Activated CD4-positive, alpha-beta T cell treated with anti-CD3 and anti-CD28 coated beads for 36 hours (primary cell): ENCODE measurements at regions of chr1 and their contacts with region 1.

Region 1: GRCh38 chr1:6784560-6785317 is 515 bp upstream of the CAMTA1 start:
- DNase-seq: peak; percentile 99
- ATAC-seq: peak; percentile 88
- H3K4me3 Mint-ChIP-seq: peak overlapping the region; percentile 75
- H3K27ac Mint-ChIP-seq: peak overlapping the region; percentile 78
- H3K4me1 Mint-ChIP-seq: peaks cover 42% of the 10 kb centered on the region
- H3K27me3 Mint-ChIP-seq: no peaks in the 10 kb centered on the region

Region 2: DNA sequence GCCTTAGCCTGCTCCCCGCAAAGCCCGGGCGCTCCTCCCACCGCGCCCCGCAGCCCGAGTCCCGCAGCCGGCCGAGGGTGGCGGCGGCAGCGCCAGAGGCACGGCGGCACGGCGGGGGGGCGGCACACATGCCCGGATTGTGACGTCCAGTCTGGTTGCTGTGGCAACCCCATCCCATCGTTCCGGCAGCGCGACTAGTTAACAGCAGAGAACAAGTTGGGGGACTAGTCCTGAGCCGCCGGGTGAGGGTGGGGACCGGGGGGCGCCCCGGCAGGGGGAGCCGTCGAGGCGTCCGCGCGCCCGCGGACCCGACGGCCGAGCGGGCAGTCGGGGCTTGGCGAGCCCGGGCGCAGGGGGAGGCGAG is 604.5 kb before region 1 on chr1 and contains the start of gene CHD5:
- CTCF ChIA-PET with region 1: no interaction called
- POLR2A ChIA-PET with region 1: no interaction called
- intact Hi-C with region 1: no loop called
- DNase-seq: peak; percentile 26
- ATAC-seq: no peak
- H3K4me3 Mint-ChIP-seq: no peak within 1 kb of the TSS
- H3K27ac Mint-ChIP-seq: no peak within 1 kb of the TSS
- H3K4me1 Mint-ChIP-seq: peaks cover 25% of the 10 kb centered on the region
- H3K27me3 Mint-ChIP-seq: peaks cover 36% of the 10 kb centered on the region
- total RNA-seq, gene CHD5: 0.25 to 0.76 TPM

Region 3: GRCh38 chr1:6235296-6235677 is 549.5 kb before region 1 on chr1:
- CTCF ChIA-PET with region 1: no interaction called
- POLR2A ChIA-PET with region 1: no interaction called
- intact Hi-C with region 1: loop called in 1 of 2 experiments (anchors 10 kb)
- DNase-seq: no peak
- ATAC-seq: peak; percentile 7
- H3K4me3 Mint-ChIP-seq: peak overlapping the region; percentile 88
- H3K27ac Mint-ChIP-seq: peak overlapping the region; percentile 78
- H3K4me1 Mint-ChIP-seq: peaks cover 12% of the 10 kb centered on the region
- H3K27me3 Mint-ChIP-seq: peaks cover 11% of the 10 kb centered on the region

Region 4: GRCh38 chr1:6246497-6247295 is 538.0 kb before region 1 on chr1:
- CTCF ChIA-PET with region 1: no interaction called
- POLR2A ChIA-PET with region 1: no interaction called
- intact Hi-C with region 1: no loop called
- DNase-seq: peak; percentile 90
- ATAC-seq: peak; percentile 70
- H3K4me3 Mint-ChIP-seq: no peak overlapping the region
- H3K27ac Mint-ChIP-seq: peak overlapping the region; percentile 35
- H3K4me1 Mint-ChIP-seq: peaks cover 7% of the 10 kb centered on the region
- H3K27me3 Mint-ChIP-seq: peaks cover 49% of the 10 kb centered on the region

Region 5: GRCh38 chr1:6554031-6554906 is 230.5 kb before region 1 on chr1 and contains the start of gene NOL9:
- CTCF ChIA-PET with region 1: no interaction called
- POLR2A ChIA-PET with region 1: no interaction called
- intact Hi-C with region 1: loop called in 1 of 2 experiments (anchors 5 kb)
- DNase-seq: peak; percentile 97
- ATAC-seq: peak; percentile 98
- H3K4me3 Mint-ChIP-seq: peak within 1 kb of the TSS; percentile 82
- H3K27ac Mint-ChIP-seq: peak within 1 kb of the TSS; percentile 55
- H3K4me1 Mint-ChIP-seq: peaks cover 19% of the 10 kb centered on the region
- H3K27me3 Mint-ChIP-seq: no peaks in the 10 kb centered on the region
- total RNA-seq, gene NOL9: 37.4 to 44.7 TPM

Region 6: GRCh38 chr1:6574025-6574620 is 210.6 kb before region 1 on chr1:
- CTCF ChIA-PET with region 1: no interaction called
- POLR2A ChIA-PET with region 1: no interaction called
- intact Hi-C with region 1: no loop called
- DNase-seq: no peak
- ATAC-seq: no peak
- H3K4me3 Mint-ChIP-seq: no peak overlapping the region
- H3K27ac Mint-ChIP-seq: no peak overlapping the region
- H3K4me1 Mint-ChIP-seq: peaks cover 1% of the 10 kb centered on the region
- H3K27me3 Mint-ChIP-seq: no peaks in the 10 kb centered on the region

Region 7: GRCh38 chr1:6624710-6625583 is 159.8 kb before region 1 on chr1 and contains the start of gene THAP3:
- CTCF ChIA-PET with region 1: no interaction called
- POLR2A ChIA-PET with region 1: interaction called, 5 read pairs
- intact Hi-C with region 1: loop called in 1 of 2 experiments (anchors 1 kb)
- DNase-seq: peak; percentile 96
- ATAC-seq: peak; percentile 98
- H3K4me3 Mint-ChIP-seq: peak within 1 kb of the TSS; percentile 85
- H3K27ac Mint-ChIP-seq: peak within 1 kb of the TSS; percentile 78
- H3K4me1 Mint-ChIP-seq: peaks cover 28% of the 10 kb centered on the region
- H3K27me3 Mint-ChIP-seq: no peaks in the 10 kb centered on the region
- total RNA-seq, gene THAP3: 19.4 to 22.1 TPM

Region 8: DNA sequence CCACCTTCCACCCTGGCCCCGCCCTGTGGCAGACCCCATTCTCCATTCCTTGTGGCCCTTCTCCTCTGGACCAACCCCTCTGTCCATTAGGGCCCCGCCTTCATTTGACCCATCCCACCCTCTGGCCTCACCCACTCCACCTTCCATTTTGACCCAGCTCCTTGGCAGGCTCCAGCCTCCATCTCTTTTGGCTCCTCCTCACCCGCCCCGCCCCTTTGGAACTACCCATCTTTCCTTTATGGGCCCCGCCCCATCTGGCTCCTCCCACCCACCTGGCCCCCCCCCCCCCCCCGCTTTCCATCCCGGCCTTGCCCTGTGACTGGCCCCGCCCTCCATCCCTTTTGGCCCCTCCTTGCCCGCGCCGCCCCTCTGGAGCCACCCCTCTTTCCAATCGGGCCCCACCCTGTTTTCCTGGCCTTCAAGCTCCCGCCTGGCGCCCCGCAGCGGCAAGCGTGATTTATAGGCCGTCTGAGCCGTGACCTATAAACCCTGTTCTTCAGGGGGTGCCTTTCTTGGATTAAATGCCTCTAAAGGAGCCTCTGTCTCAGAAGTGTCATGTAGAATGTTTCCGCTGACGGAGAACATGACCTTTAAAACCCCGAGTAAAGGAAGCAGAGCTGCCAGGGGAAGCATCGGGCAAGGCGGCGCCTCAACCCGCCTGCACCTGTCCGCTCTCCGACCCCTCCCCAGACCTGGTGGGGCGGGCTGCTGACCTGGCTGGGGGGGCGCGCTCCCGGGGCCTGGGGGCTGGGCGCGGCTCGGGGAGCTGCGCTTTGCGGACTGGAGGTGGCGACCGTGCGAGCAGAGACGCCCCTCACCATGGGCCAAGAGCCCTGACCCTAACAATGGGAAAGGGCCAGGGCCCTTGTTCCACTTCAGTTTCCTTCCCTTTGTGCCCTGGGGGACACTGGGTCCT is 178.5 kb after region 1 on chr1:
- CTCF ChIA-PET with region 1: no interaction called
- POLR2A ChIA-PET with region 1: interaction called, 3 read pairs
- intact Hi-C with region 1: loop called in 1 of 2 experiments (anchors 1 kb)
- DNase-seq: peak; percentile 93
- ATAC-seq: peak; percentile 63
- H3K4me3 Mint-ChIP-seq: peak overlapping the region; percentile 69
- H3K27ac Mint-ChIP-seq: peak overlapping the region; percentile 85
- H3K4me1 Mint-ChIP-seq: peaks cover 22% of the 10 kb centered on the region
- H3K27me3 Mint-ChIP-seq: peaks cover 8% of the 10 kb centered on the region

Region 9: GRCh38 chr1:7373876-7374562 is 589.3 kb after region 1 on chr1:
- CTCF ChIA-PET with region 1: no interaction called
- POLR2A ChIA-PET with region 1: no interaction called
- intact Hi-C with region 1: no loop called
- DNase-seq: no peak
- ATAC-seq: no peak
- H3K4me3 Mint-ChIP-seq: no peak overlapping the region
- H3K27ac Mint-ChIP-seq: no peak overlapping the region
- H3K4me1 Mint-ChIP-seq: no peaks in the 10 kb centered on the region
- H3K27me3 Mint-ChIP-seq: peaks cover 2% of the 10 kb centered on the region

Region 10: DNA sequence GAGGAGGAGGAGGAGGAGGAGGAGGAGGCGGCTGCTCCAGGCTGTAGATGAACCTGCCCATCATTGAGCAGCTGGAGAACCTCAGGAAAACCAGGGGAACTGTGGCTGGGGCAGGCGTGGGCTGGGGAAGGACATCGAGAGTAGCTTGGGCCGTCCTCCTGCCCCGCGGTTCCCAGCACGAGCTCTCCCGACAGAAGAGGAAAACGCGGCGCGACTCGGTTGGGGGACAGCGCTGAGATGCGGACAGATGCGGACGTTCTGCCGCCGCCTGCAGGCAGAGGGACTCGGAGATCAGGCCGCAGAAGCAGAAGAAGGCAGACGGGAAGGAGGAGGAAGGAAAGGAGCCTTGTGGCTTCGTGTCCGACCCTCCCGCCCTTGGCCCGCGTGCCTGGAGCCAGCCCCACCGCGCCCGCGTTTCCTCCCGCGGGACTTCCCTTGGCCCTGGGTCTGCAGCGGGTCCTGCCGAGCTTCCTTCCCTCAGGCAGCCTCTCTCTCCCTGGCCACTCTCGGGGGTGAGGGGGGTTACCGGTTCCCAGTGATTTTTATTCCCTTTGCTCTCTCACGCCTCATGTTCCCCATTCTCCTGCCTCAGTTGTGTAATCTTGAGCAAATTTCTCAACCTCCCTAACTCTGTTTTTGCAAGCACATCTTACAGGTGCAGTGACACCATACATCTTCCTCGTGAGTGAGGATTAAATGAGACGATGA is 1157.6 kb after region 1 on chr1:
- CTCF ChIA-PET with region 1: no interaction called
- POLR2A ChIA-PET with region 1: no interaction called
- intact Hi-C with region 1: loop called in 1 of 2 experiments (anchors 10 kb)
- DNase-seq: peak; percentile 57
- ATAC-seq: peak; percentile 25
- H3K4me3 Mint-ChIP-seq: peak overlapping the region; percentile 66
- H3K27ac Mint-ChIP-seq: peak overlapping the region; percentile 73
- H3K4me1 Mint-ChIP-seq: peaks cover 47% of the 10 kb centered on the region
- H3K27me3 Mint-ChIP-seq: peaks cover 28% of the 10 kb centered on the region